Cardiac septum (tissue), 1 donor: ENCODE measurements at regions of chr11 and their contacts with region 1.

Region 1: DNA sequence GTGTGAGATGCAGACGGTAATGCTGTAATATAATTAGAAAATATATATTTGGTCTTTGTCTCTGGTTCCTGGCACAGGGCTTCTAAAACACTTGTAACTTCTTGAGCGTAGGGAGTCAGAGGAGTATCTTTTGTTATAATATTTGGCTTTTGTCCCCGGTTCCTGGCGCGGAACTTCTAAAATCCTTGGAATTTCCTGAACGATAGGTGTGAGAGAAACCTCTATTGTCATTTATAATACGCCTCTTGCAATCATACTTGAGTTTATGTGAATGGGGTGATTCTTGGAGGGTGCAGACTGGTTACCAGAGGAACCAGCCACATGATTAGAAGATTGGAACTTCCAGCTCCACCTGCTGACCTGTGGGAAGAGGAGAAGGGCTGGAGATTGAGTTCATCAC is 54.1 kb upstream of the ZBED5 start:
- DNase-seq: no peak

Region 2: GRCh38 chr11:9982800-9983579 is 928.9 kb before region 1 on chr11:
- intact Hi-C with region 1: no loop called
- DNase-seq: no peak

Region 3: GRCh38 chr11:10784232-10785145 is 127.4 kb before region 1 on chr11:
- intact Hi-C with region 1: loop called (anchors 5 kb)
- DNase-seq: no peak

Region 4: DNA sequence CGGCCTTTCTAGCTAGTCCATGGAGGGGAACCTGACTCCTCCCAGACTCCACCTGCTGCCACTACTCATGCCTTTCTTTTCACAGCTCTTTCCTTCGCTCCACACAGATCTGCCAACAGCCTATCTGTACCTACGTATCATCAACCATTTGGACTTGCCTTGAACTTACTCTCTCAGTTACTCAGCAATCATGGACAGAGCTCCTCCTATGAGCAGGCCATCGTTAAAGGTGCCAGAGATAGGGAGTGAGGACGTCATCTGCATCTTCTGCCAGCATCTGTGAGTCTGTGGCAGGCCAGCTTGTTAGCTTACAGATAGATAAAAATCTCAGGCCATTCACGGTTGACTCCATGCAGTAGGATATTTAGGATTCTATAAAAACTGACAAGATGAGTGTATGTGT is 108.8 kb after region 1 on chr11:
- intact Hi-C with region 1: no loop called
- DNase-seq: no peak